Activated B cell treated with CpG ODN at 0.5 μM for 24 hours (primary cell): ENCODE measurements at regions of chr22 and their contacts with region 1.

Region 1: DNA sequence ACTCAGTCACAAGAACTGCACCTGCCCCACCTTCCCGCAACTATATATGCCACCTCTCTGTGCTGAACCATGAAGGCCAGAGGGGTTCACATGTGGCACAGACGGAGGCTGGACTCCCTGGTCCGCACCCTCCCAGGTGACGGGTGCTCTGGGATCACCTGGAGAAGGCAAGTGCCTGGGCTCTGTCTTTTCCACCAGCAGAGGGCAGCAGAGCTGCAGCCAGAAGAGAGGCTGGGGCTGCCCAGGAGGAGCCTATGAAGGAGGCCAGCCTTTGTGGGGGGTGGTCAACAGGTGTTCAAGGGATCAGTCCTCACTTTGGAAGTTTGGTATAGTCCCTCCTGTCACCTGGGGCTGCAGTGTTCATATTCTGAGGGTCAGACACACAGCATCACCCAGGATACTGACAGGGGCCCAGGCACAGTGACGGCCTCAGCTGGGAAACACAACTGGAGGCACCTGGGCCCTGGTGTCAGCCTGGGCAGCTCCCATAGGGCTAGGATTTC is 39.2 kb upstream of the IGLL5 start:
- DNase-seq: peak; percentile 62
- ATAC-seq: peak; percentile 67
- H3K4me3 Mint-ChIP-seq: no peak overlapping the region
- H3K27ac Mint-ChIP-seq: no peak overlapping the region
- H3K4me1 Mint-ChIP-seq: peaks cover 39% of the 10 kb centered on the region
- H3K27me3 Mint-ChIP-seq: peaks cover 10% of the 10 kb centered on the region
- CTCF ChIP-seq: peak; percentile 79

Region 2: DNA sequence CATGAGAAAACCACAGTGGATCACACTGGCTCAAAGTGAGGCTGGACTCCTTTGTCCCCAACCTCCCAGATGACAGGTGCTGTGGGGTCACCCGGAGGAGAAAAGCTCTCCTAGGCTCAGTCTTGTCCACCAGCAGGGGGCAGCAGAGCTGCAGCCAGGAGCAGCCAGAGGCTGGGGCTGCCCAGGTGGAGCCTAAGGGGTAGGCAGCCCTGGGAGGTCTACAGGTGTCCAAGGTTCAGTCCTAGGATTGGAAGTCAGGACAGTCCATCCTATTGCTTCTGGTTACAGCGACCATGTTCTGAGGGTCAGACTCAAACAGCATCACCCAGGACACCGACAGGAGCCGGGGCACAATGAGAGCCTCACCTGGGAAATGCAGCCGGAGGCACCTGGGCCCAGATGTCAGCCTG is 38.4 kb before region 1 on chr22:
- CTCF ChIA-PET with region 1: interaction called, 35 read pairs
- POLR2A ChIA-PET with region 1: no interaction called
- intact Hi-C with region 1: loop called (anchors 1 kb)
- DNase-seq: peak; percentile 60
- ATAC-seq: peak; percentile 76
- H3K4me3 Mint-ChIP-seq: no peak overlapping the region
- H3K27ac Mint-ChIP-seq: no peak overlapping the region
- H3K4me1 Mint-ChIP-seq: peaks cover 21% of the 10 kb centered on the region
- H3K27me3 Mint-ChIP-seq: peaks cover 3% of the 10 kb centered on the region
- CTCF ChIP-seq: peak; percentile 80

Region 3: DNA sequence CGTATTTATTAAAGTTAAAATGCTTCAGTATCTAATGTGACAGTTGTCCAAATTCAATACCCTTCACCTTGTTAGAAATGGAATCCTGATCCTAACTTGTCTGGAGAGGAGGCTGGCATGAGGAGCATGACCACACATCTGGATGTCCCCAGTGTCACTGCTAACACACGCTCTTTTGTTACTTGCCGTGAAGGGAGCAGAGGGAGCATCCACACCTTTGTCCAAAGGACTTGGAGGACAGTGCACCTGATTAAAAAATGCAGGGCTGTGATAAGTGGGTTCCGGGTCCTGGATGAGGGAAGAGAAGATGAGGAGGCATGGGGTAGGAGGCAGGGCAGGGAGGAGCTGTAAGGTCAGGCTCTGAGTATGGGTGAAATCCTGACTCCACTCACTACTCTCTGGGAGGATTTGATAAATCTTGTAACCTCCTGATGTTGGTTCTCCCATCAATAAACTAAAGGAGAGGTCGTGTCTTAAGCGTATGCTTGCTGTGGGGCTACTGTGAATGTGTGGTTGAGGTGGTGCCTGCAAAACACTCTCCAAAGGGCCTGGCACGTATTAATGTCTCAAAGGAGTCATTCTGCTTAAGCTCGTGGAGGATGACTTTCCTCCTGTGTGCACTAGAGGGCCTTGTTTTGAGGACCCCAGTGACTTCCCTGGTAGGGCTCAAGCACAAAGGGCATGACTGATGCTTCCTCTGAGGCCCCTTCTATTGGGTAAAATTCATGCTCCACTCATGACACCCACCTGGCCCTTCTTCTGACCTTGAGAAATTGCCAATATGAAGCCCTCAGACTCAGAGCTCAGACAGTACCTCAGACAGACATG is 22.4 kb after region 1 on chr22:
- CTCF ChIA-PET with region 1: interaction called, 13 read pairs
- POLR2A ChIA-PET with region 1: interaction called, 4 read pairs
- intact Hi-C with region 1: no loop called
- DNase-seq: no peak
- ATAC-seq: peak; percentile 43
- H3K4me3 Mint-ChIP-seq: peak overlapping the region; percentile 15
- H3K27ac Mint-ChIP-seq: peak overlapping the region; percentile 30
- H3K4me1 Mint-ChIP-seq: peaks cover 39% of the 10 kb centered on the region
- H3K27me3 Mint-ChIP-seq: peaks cover 2% of the 10 kb centered on the region
- CTCF ChIP-seq: no peak

Region 4: GRCh38 chr22:22877523-22878210 is 29.3 kb after region 1 on chr22:
- CTCF ChIA-PET with region 1: interaction called, 119 read pairs
- POLR2A ChIA-PET with region 1: interaction called, 68 read pairs
- intact Hi-C with region 1: no loop called
- DNase-seq: no peak
- ATAC-seq: no peak
- H3K4me3 Mint-ChIP-seq: no peak overlapping the region
- H3K27ac Mint-ChIP-seq: no peak overlapping the region
- H3K4me1 Mint-ChIP-seq: peaks cover 56% of the 10 kb centered on the region
- H3K27me3 Mint-ChIP-seq: no peaks in the 10 kb centered on the region
- CTCF ChIP-seq: no peak